B cell (primary cell): ENCODE measurements at regions of chr2 and their contacts with region 1.

Region 1: DNA sequence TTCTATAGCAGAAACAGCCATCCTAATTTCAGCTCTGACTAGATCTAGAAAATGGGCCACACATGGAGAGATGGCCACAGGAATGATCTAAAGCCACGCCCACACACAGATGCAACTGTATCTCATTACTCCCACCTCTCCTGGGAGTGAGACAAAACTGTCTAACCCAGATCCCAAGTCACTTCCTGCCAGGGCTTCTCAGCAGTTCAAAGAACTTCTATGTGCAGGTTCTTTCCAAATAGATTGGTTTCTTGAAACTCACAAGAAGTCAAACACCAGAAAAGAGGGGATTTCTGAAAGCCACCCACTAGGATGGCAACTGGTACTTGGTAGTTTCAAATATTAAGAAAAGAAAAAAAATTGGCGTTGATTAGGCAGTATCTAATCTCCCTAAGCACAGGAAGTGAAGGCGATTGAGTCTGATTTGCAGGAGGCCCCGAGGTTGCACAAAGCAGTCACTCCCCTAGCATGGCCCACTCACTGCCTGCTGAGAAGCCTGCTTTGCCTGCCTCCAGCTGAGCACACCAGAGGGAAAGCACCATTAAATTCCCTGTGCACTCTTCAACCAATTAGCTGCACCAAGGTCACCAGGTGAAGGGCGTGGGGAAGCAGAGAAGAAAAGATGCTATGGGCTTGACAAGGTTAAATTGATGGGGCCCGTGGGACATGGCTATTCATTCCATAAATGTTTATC is 51.1 kb downstream of the PAPOLG start:
- DNase-seq: peak; percentile 32
- ATAC-seq: peak; percentile 56
- H3K4me3 ChIP-seq: no peak overlapping the region
- H3K4me3 Mint-ChIP-seq: no peak overlapping the region
- H3K27ac ChIP-seq: peak overlapping the region; percentile 31 to 55
- H3K27ac Mint-ChIP-seq: peak overlapping the region; percentile 83
- H3K4me1 ChIP-seq: peaks cover 20 to 32% of the 10 kb centered on the region in 2 donors
- H3K4me1 Mint-ChIP-seq: peaks cover 34% of the 10 kb centered on the region
- H3K27me3 ChIP-seq: no peaks in the 10 kb centered on the region
- H3K27me3 Mint-ChIP-seq: no peaks in the 10 kb centered on the region
- CTCF ChIP-seq: no peak

Region 2: GRCh38 chr2:61959381-61960293 is 1152.5 kb after region 1 on chr2:
- CTCF ChIA-PET with region 1: no interaction called
- POLR2A ChIA-PET with region 1: interaction called, 16 read pairs
- intact Hi-C with region 1: no loop called
- DNase-seq: no peak
- ATAC-seq: no peak
- H3K4me3 ChIP-seq: no peak overlapping the region
- H3K4me3 Mint-ChIP-seq: no peak overlapping the region
- H3K27ac ChIP-seq: no peak overlapping the region
- H3K27ac Mint-ChIP-seq: no peak overlapping the region
- H3K4me1 ChIP-seq: no peaks in the 10 kb centered on the region
- H3K4me1 Mint-ChIP-seq: peaks cover 3% of the 10 kb centered on the region
- H3K27me3 ChIP-seq: no peaks in the 10 kb centered on the region
- H3K27me3 Mint-ChIP-seq: no peaks in the 10 kb centered on the region
- CTCF ChIP-seq: no peak